B cell (primary cell): ENCODE measurements at regions of chr2 and their contacts with region 1.

Region 1: DNA sequence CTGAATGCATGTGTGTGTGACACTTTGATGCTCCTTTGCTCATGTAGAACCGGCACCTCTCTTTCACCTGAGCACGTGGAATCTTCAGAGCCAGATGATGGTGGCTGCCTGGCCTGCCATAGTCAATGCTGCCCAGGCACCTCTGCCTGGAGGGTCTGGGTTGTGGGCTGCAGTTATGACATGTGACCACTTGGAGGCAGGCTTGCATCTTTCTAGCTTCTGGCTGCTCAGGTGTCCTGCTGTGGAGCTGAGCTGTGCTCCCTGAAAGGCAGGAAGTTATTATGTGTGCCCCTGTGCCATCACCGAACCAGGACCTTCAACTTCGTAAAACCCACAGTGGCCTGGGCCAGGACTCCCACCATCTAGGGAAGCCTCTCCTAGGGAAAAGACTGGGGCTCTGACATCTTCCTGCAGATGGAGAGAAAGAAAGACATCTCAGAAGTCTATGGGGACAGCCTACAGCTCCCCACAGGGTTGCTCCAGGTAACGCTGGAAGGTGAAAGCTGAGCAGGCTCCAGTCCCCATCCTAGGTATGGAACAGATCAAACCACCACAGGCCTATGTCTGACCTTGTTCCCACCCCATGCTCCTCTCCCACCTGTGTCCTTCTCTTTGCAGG is 30.2 kb downstream of the PSD4 start:
- DNase-seq: peak; percentile 82
- ATAC-seq: peak; percentile 78
- H3K4me3 ChIP-seq: no peak overlapping the region
- H3K4me3 Mint-ChIP-seq: no peak overlapping the region
- H3K27ac ChIP-seq: peak overlapping the region; percentile 42 to 53
- H3K27ac Mint-ChIP-seq: peak overlapping the region; percentile 90
- H3K4me1 ChIP-seq: peaks cover 10 to 16% of the 10 kb centered on the region in 2 donors
- H3K4me1 Mint-ChIP-seq: peaks cover 24% of the 10 kb centered on the region
- H3K27me3 ChIP-seq: no peaks in the 10 kb centered on the region
- H3K27me3 Mint-ChIP-seq: no peaks in the 10 kb centered on the region
- CTCF ChIP-seq: peak; percentile 80

Region 2: DNA sequence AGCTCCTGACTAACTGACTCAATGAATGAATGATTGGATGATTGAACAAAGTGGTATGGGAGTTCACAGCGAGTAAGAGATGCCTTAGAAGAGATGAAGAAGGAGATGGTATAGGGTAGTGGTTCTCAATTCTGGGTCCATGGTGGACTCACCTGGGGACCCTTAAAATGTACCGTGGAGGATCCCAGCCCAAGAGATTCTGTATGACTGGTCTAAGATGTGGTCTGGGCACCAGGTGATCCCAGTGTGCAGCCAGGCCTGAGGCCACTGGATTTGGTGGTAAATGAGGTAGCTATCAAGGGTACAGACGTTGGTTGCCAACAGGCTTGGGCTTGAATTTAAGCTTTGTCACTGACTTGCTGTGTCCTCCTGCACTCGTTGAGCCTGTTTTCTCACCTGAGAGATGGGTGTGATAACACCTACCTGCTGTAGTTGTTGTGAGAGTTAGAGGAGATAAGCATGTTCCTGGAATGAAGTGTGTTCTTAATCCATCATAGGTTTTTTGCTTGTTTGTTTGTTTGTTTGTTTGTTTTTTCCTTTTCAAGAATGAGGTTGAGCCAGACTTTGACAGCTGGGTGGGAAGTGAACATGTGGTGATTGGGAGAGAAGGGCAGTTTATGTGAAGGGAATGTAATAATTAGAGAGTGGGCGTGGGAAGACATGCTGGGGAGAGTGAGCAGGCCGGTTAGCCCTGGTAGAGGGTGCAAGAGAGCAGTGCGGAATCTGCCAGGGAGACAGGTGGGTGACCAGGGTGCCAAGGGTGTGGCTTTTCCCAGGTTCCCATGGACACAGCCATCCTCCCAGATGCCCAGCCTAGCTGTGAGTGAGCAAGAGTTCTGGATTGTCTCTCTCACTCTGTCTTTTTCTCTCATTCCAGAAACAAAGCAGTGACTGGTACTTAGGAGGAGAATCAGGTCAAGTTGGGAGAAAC is 336.0 kb before region 1 on chr2:
- CTCF ChIA-PET with region 1: no interaction called
- POLR2A ChIA-PET with region 1: no interaction called
- intact Hi-C with region 1: no loop called
- DNase-seq: no peak
- ATAC-seq: no peak
- H3K4me3 ChIP-seq: no peak overlapping the region
- H3K4me3 Mint-ChIP-seq: no peak overlapping the region
- H3K27ac ChIP-seq: no peak overlapping the region
- H3K27ac Mint-ChIP-seq: no peak overlapping the region
- H3K4me1 ChIP-seq: no peaks in the 10 kb centered on the region
- H3K4me1 Mint-ChIP-seq: no peaks in the 10 kb centered on the region
- H3K27me3 ChIP-seq: peaks cover 0 to 4% (median 0%) of the 10 kb centered on the region in 4 experiments
- H3K27me3 Mint-ChIP-seq: peaks cover 35% of the 10 kb centered on the region
- CTCF ChIP-seq: no peak

Region 3: DNA sequence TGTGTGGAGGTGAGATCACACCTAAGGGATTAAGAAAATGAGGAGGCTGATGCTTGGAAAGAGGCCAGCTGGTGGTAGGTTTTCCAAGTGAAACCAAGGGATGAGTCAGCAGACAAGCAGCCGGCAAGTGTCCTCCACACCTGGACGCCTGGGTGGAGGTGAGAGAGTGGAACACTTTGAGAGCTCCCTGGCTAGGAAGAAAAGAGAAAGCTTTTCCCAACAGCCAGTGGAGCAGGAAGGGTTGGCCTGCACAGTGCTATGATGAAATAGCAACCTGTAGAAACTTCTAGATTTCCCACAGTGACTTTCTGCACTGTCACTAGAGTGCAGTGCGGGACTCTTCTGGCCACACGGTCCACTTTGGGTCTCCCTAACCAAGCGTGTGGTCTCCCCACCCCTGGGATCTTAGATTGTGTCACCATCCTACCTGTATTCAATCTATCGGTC is 312.6 kb before region 1 on chr2:
- CTCF ChIA-PET with region 1: no interaction called
- POLR2A ChIA-PET with region 1: no interaction called
- intact Hi-C with region 1: no loop called
- DNase-seq: no peak
- ATAC-seq: no peak
- H3K4me3 ChIP-seq: no peak overlapping the region
- H3K4me3 Mint-ChIP-seq: no peak overlapping the region
- H3K27ac ChIP-seq: no peak overlapping the region
- H3K27ac Mint-ChIP-seq: no peak overlapping the region
- H3K4me1 ChIP-seq: no peaks in the 10 kb centered on the region
- H3K4me1 Mint-ChIP-seq: no peaks in the 10 kb centered on the region
- H3K27me3 ChIP-seq: no peaks in the 10 kb centered on the region
- H3K27me3 Mint-ChIP-seq: no peaks in the 10 kb centered on the region
- CTCF ChIP-seq: no peak

Region 4: DNA sequence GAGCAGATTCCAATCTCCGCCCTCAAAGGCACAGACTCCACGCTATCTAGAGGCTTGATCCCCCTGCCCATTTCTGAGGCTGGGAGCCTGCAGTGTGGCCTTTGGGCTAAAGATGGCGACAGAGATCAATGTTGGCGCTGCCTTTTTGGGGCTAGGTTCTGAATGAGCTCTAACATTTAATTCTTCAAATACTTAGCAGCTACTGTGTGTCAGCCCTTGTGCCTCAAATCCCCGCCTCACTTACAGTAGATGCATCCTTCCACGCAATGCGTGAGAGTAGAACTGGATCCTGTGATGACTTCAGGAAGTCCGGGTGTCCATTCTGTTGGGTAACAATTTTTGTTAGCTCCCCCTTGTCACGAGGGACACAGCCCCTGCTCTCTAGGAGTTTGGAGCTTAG is 123.9 kb before region 1 on chr2:
- CTCF ChIA-PET with region 1: interaction called, 18 read pairs
- POLR2A ChIA-PET with region 1: interaction called, 3 read pairs
- intact Hi-C with region 1: loop called (anchors 1 kb)
- DNase-seq: peak; percentile 59
- ATAC-seq: peak; percentile 51
- H3K4me3 ChIP-seq: no peak overlapping the region
- H3K4me3 Mint-ChIP-seq: no peak overlapping the region
- H3K27ac ChIP-seq: no peak overlapping the region
- H3K27ac Mint-ChIP-seq: no peak overlapping the region
- H3K4me1 ChIP-seq: no peaks in the 10 kb centered on the region
- H3K4me1 Mint-ChIP-seq: peaks cover 2% of the 10 kb centered on the region
- H3K27me3 ChIP-seq: peaks cover 0 to 14% (median 6%) of the 10 kb centered on the region in 4 experiments
- H3K27me3 Mint-ChIP-seq: peaks cover 39% of the 10 kb centered on the region
- CTCF ChIP-seq: peak; percentile 80

Region 5: GRCh38 chr2:113173542-113174395 is 30.2 kb before region 1 on chr2 and contains the start of gene PSD4:
- CTCF ChIA-PET with region 1: interaction called, 257 read pairs
- POLR2A ChIA-PET with region 1: interaction called, 14 read pairs
- intact Hi-C with region 1: loop called (anchors 1 kb)
- DNase-seq: peak; percentile 83
- ATAC-seq: peak; percentile 73
- H3K4me3 ChIP-seq: peak within 1 kb of the TSS; percentile 58 to 95 (median 77)
- H3K4me3 Mint-ChIP-seq: peak within 1 kb of the TSS; percentile 91
- H3K27ac ChIP-seq: peak within 1 kb of the TSS; percentile 87 to 91
- H3K27ac Mint-ChIP-seq: peak within 1 kb of the TSS; percentile 92
- H3K4me1 ChIP-seq: peaks cover 69 to 90% of the 10 kb centered on the region in 2 donors
- H3K4me1 Mint-ChIP-seq: peaks cover 86% of the 10 kb centered on the region
- H3K27me3 ChIP-seq: no peaks in the 10 kb centered on the region
- H3K27me3 Mint-ChIP-seq: no peaks in the 10 kb centered on the region
- CTCF ChIP-seq: no peak
- total RNA-seq, gene PSD4: 203 and 217 TPM in 2 replicates

Region 6: DNA sequence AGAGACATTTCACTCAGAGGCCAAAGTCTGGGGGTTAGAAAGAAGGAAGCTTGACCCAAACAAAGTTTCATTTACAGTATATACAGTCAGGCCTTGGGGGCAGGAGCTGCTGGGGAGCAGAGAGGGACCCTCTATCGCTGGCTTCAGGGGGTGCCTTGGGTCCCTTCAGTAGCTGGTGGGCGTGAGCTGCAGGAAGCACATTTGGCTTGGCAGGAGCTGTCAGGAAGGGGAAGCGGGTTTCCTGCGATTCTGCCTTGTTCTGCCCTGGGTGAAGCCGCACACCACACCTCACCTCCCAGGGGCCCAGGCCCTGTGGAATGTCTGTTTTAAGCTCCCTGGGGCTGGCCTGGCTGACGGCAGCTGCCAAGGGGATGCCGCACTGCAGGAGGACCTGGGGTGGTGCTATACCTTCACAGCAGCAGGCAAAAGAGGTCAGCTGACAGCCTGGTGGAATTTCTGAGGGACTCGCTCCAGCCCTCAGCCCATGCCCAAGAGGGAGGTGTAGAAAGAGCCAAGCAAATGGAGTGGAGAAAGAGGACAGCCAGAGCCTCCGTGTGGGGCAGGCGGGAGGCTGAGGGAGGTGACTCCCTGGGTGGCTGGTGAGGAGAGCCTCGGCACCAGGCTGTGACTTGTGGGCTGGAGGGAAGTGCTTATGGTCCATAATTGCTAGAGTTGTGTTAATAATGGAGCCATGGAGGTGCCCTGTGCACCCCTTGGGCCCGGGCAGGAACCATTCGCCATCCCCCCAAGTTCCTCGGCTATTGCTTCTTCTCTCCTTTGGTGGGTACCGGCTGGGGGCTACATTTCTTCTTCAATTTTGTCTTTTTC is 13.7 kb after region 1 on chr2:
- CTCF ChIA-PET with region 1: interaction called, 10 read pairs
- POLR2A ChIA-PET with region 1: no interaction called
- intact Hi-C with region 1: no loop called
- DNase-seq: no peak
- ATAC-seq: no peak
- H3K4me3 ChIP-seq: no peak overlapping the region
- H3K4me3 Mint-ChIP-seq: no peak overlapping the region
- H3K27ac ChIP-seq: no peak overlapping the region
- H3K27ac Mint-ChIP-seq: no peak overlapping the region
- H3K4me1 ChIP-seq: peaks cover 10 to 12% of the 10 kb centered on the region in 2 donors
- H3K4me1 Mint-ChIP-seq: peaks cover 15% of the 10 kb centered on the region
- H3K27me3 ChIP-seq: peaks cover 0 to 19% (median 5%) of the 10 kb centered on the region in 4 experiments
- H3K27me3 Mint-ChIP-seq: peaks cover 15% of the 10 kb centered on the region
- CTCF ChIP-seq: no peak

Region 7: DNA sequence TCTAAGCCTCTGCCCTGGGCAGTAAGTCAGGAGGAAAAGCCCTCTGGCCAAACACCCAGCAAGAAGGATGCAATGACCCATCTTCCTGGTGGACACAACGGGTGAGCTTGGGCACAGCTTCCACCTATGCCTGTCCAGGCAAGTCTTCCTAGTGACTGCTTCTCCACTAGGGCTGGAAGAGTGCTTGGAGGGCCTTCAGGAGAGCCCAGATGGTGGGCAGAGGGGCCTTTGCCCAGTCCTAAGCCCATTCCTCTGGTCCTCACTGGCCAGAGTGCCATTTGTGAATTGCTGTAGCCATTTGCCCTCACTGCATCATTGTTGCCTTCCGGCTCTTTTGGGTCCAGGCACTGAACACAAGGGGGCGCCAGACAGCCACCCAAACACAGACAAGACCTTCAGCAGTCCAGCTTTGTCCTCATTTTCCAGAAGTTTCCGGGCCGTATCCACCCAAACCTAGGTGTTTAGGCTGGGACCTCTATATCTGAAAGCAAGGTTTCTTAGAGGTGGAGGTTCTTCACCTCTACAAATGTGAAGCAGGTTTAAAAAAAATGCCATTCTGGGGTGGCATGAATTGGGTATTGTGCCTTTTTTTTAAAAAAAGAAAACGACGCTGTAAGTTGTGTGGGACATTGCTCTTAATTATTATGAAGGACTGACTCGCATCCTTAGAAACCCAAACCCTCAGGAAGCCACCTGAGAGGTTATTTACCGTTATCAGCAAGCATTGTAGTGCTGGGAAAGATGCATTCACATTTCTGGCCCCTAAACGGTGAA is 45.2 kb after region 1 on chr2:
- CTCF ChIA-PET with region 1: interaction called, 41 read pairs
- POLR2A ChIA-PET with region 1: no interaction called
- intact Hi-C with region 1: no loop called
- DNase-seq: peak; percentile 84
- ATAC-seq: peak; percentile 58
- H3K4me3 ChIP-seq: no peak overlapping the region
- H3K4me3 Mint-ChIP-seq: no peak overlapping the region
- H3K27ac ChIP-seq: no peak overlapping the region
- H3K27ac Mint-ChIP-seq: peak overlapping the region; percentile 28
- H3K4me1 ChIP-seq: peaks cover 6 to 16% of the 10 kb centered on the region in 2 donors
- H3K4me1 Mint-ChIP-seq: peaks cover 13% of the 10 kb centered on the region
- H3K27me3 ChIP-seq: no peaks in the 10 kb centered on the region
- H3K27me3 Mint-ChIP-seq: no peaks in the 10 kb centered on the region
- CTCF ChIP-seq: peak; percentile 94

Region 8: DNA sequence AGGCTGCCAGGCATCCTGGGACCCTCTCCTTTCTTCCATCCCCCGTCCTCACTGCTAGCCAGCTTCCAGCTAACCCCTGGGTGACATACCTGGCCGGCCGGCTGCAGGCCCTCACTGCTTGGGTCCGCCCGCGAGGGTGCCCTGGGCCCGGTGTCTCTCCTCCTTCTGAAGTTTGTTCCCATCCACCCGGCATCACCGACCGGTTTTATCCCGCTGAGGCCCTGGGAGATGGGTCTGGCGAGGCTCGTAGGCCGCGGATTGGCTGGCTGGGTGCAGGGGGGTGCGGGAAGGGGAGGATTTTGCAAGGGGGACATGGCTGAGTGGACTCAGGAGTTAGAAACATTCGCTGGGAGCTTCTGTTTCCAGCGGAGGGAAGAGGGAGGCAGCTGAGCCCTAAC is 74.7 kb after region 1 on chr2 and contains the start of gene PAX8:
- CTCF ChIA-PET with region 1: no interaction called
- POLR2A ChIA-PET with region 1: no interaction called
- intact Hi-C with region 1: no loop called
- DNase-seq: no peak
- ATAC-seq: no peak
- H3K4me3 ChIP-seq: no peak within 1 kb of the TSS
- H3K4me3 Mint-ChIP-seq: no peak within 1 kb of the TSS
- H3K27ac ChIP-seq: no peak within 1 kb of the TSS
- H3K27ac Mint-ChIP-seq: no peak within 1 kb of the TSS
- H3K4me1 ChIP-seq: peaks cover 23 to 30% of the 10 kb centered on the region in 2 donors
- H3K4me1 Mint-ChIP-seq: peaks cover 13% of the 10 kb centered on the region
- H3K27me3 ChIP-seq: peaks cover 0 to 53% (median 36%) of the 10 kb centered on the region in 4 experiments
- H3K27me3 Mint-ChIP-seq: peaks cover 57% of the 10 kb centered on the region
- CTCF ChIP-seq: no peak
- total RNA-seq, gene PAX8: 0.64 and 1.2 TPM in 2 replicates

Region 9: DNA sequence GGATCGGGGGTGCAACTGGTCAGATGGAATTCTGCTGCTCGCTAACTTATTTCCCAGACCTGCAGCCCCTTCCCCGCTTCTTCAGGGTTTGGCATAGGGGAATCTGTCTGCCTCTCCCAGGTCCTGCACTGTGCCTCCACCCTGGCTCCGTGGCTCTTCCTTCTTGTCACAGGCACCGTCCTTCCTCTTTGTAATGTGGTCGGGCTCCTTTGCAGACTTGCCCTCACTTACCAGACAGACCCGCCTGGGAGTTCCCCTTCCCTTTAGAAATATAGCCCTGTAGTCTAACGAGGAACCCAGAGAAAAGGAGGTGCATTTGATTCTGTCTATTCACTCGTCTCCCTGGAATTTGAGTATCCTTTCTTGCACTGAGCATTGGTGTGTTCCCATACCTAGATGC is 138.6 kb after region 1 on chr2:
- CTCF ChIA-PET with region 1: no interaction called
- POLR2A ChIA-PET with region 1: no interaction called
- intact Hi-C with region 1: no loop called
- DNase-seq: peak; percentile 36
- ATAC-seq: no peak
- H3K4me3 ChIP-seq: no peak overlapping the region
- H3K4me3 Mint-ChIP-seq: no peak overlapping the region
- H3K27ac ChIP-seq: no peak overlapping the region
- H3K27ac Mint-ChIP-seq: no peak overlapping the region
- H3K4me1 ChIP-seq: peaks cover 0 to 7% of the 10 kb centered on the region in 2 donors
- H3K4me1 Mint-ChIP-seq: peaks cover 5% of the 10 kb centered on the region
- H3K27me3 ChIP-seq: peaks cover 0 to 10% (median 0%) of the 10 kb centered on the region in 4 experiments
- H3K27me3 Mint-ChIP-seq: peaks cover 23% of the 10 kb centered on the region
- CTCF ChIP-seq: no peak

Region 10: DNA sequence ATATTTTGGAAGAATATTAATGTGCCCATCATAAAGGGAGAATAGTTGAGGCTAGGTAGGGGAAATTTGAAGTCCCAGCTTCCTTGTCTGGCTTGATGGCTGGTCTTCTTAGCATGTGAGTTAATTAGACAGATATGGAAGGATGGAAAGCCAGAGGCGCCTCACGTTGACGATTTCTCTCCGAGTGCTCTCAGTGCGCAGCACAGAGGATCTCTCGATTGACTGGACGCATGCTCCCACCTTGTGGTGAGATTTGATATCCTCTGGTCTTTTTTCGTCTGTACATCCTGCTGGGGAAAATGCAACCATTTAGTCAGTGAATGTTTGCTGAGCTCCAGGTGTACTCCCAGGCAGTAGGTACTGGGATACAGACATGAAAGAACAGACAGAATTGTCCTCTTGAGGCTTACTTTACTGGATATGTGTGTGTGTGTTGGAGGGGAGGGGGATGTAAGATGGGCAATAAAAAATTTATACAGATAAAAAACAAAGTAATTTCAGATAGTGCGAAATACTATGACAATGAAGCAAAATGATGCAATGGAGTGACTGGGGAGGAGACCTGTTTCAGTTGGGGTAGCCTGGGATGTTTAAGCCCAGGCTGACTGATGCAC is 166.6 kb after region 1 on chr2:
- CTCF ChIA-PET with region 1: interaction called, 4 read pairs
- POLR2A ChIA-PET with region 1: no interaction called
- intact Hi-C with region 1: loop called (anchors 2 kb)
- DNase-seq: peak; percentile 64
- ATAC-seq: peak; percentile 84
- H3K4me3 ChIP-seq: no peak overlapping the region
- H3K4me3 Mint-ChIP-seq: no peak overlapping the region
- H3K27ac ChIP-seq: no peak overlapping the region
- H3K27ac Mint-ChIP-seq: no peak overlapping the region
- H3K4me1 ChIP-seq: no peaks in the 10 kb centered on the region
- H3K4me1 Mint-ChIP-seq: peaks cover 14% of the 10 kb centered on the region
- H3K27me3 ChIP-seq: no peaks in the 10 kb centered on the region
- H3K27me3 Mint-ChIP-seq: no peaks in the 10 kb centered on the region
- CTCF ChIP-seq: peak; percentile 57